Lower leg skin (tissue), 4 donors: ENCODE measurements at regions of chr16 and their contacts with region 1.

Region 1: GRCh38 chr16:50665128-50665878 is 15.8 kb downstream of the SNX20 start:
- DNase-seq: peak; percentile 70 to 95
- H3K4me3 ChIP-seq: no peak overlapping the region
- CTCF ChIP-seq: peak in 1 of 3 donors; percentile 27
- POLR2A ChIP-seq: no peak

Region 2: DNA sequence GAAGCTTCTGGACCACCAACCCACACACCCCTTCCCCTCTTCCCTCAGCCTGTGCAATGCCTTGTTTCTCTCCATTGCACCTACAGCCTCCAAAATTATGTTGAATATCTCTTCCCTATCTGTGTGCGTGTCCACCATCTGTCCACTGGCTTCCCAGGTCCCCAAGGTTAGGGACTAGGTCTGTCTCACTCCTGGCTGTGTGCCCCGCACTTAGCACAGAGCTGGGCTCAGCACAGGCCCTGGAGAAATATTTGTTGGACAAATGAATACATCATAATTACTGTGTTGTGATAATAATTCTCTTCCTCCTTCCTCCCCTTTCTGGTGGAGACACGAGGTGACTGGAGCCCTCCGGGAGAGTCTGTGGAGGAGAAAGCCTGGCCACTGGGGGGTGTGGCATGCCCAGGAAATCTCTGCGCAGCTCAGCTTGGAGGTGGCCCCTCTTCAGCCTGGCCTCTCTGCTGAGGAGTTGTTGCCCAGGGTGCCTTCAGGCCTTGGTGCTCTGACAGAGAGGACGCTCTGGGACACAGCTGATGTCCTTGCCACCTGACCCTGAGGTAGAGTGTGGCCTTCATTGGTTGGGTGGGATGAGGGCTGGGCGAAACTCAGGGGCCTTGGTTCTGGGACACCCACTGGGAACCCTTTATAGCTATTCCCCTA is 293.2 kb before region 1 on chr16:
- intact Hi-C with region 1: loop called (anchors 10 kb)
- DNase-seq: no peak
- H3K4me3 ChIP-seq: no peak overlapping the region
- CTCF ChIP-seq: no peak
- POLR2A ChIP-seq: no peak

Region 3: DNA sequence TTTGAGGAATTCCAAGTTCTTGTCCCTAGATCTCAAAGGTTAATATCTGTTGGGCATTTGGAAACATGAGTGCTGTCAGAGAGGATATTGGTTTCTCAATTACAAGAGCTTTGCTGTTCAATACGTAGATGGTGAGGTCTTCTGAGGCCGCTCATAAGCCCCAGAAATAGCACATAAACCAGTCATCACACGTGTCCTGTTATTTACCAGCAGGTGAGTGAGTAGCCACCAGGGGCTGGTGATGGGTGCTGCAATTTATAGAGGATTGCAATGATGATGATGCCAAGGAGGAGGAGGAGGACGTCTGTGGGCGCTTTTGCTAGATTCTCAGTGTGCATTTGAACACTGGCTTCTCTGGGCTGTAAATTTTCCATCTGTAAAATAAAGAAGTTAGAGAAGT is 396.7 kb after region 1 on chr16:
- intact Hi-C with region 1: no loop called
- DNase-seq: peak in 1 of 2 donors; percentile 20
- H3K4me3 ChIP-seq: no peak overlapping the region
- CTCF ChIP-seq: no peak
- POLR2A ChIP-seq: no peak